K562 (cell line): ENCODE measurements at regions of chr15 and their contacts with region 1.

Region 1: DNA sequence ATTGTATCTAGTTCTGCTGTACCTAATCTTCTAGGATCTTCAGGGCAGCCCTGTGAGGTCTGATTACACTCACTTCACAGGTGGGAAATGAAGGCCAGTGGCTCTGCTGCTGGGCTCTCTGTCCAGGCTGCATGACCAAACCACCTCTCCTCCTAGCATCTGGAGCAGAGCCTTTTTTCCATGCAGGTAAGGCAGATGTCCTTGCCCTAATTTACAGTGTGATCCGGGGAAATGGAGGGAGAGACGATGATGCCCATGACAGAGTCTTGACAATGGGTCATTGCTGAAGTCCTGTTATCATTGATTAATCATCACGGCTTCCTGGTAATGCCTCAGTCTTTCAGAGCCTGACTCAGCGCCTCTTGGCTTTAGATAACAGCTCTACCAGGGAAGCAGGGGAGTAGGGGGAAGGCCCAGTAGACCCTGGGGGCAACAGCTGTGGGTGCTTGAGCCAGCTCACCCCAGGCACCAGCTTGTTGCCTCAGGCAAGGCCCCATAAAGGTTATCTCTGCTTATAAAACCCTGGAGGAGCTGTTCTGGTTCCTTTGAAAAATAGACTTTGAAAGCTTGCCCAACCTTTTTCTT is 153.4 kb downstream of the GABRG3 start:
- DNase-seq: peak; percentile 49 to 85 (median 63)
- ATAC-seq: peak; percentile 66
- H3K4me3 ChIP-seq: no peak overlapping the region
- H3K27ac ChIP-seq: peak overlapping the region; percentile 86
- H3K4me1 ChIP-seq: peaks cover 26 to 71% of the 10 kb centered on the region in 2 experiments; a peak in 4 of 5 replicates
- H3K27me3 ChIP-seq: no peaks in the 10 kb centered on the region
- CTCF ChIP-seq: no peak
- EP300 ChIP-seq: peak; percentile 75; the same call in 1 of the 2 replicates
- POLR2A ChIP-seq: no peak
- RAD21 ChIP-seq: no peak

Region 2: DNA sequence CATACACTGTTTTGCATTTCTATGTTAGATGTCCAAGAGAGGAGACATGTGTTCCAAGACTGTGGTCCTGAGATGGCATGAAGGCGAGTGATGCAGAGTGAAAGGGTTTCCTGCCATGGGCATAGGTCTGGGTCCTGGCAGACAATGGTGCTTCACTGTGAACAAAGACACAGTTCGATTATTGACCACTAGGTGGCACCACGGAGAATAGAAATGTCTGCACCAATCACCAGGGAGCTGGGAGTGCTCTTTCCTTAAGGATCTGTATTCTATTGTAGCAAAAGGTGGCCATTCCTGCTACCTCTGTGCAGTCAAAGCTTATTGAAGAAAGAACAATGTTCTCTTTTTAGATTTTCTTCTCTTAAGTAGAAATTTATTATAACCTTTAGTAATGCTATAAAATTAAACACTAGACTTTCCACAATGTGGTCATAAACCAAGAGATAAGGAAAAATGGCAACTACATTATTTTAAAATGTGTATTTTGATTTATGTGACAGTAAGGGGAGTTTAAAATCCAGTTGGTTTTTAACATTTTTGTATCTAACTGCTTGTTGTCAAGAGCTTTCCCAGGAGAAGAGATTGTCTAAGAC is 64.7 kb before region 1 on chr15:
- CTCF ChIA-PET with region 1: no interaction called
- POLR2A ChIA-PET with region 1: interaction called, 3 read pairs
- in situ Hi-C with region 1: no loop called
- intact Hi-C with region 1: loop called (anchors 10 kb)
- DNase-seq: peak; percentile 80 to 90 (median 85)
- ATAC-seq: peak; percentile 91
- H3K4me3 ChIP-seq: no peak overlapping the region
- H3K27ac ChIP-seq: no peak overlapping the region
- H3K4me1 ChIP-seq: no peaks in the 10 kb centered on the region
- H3K27me3 ChIP-seq: peaks cover 8 to 44% of the 10 kb centered on the region in 2 experiments
- CTCF ChIP-seq: peak; percentile 64 to 75 (median 71)
- EP300 ChIP-seq: no peak
- POLR2A ChIP-seq: no peak
- RAD21 ChIP-seq: peak in 1 of 2 experiments; percentile 73; a peak in 2 of 4 replicates

Region 3: GRCh38 chr15:27087651-27088583 is 36.5 kb before region 1 on chr15:
- CTCF ChIA-PET with region 1: no interaction called
- POLR2A ChIA-PET with region 1: no interaction called
- in situ Hi-C with region 1: no loop called
- intact Hi-C with region 1: loop called (anchors 2 kb)
- DNase-seq: peak; percentile 69 to 79 (median 76)
- ATAC-seq: peak; percentile 75
- H3K4me3 ChIP-seq: peak overlapping the region; percentile 55
- H3K27ac ChIP-seq: peak overlapping the region; percentile 91
- H3K4me1 ChIP-seq: peaks cover 35 to 38% of the 10 kb centered on the region in 2 experiments
- H3K27me3 ChIP-seq: no peaks in the 10 kb centered on the region
- CTCF ChIP-seq: no peak
- EP300 ChIP-seq: no peak
- POLR2A ChIP-seq: peak; percentile 68
- RAD21 ChIP-seq: no peak

Region 4: DNA sequence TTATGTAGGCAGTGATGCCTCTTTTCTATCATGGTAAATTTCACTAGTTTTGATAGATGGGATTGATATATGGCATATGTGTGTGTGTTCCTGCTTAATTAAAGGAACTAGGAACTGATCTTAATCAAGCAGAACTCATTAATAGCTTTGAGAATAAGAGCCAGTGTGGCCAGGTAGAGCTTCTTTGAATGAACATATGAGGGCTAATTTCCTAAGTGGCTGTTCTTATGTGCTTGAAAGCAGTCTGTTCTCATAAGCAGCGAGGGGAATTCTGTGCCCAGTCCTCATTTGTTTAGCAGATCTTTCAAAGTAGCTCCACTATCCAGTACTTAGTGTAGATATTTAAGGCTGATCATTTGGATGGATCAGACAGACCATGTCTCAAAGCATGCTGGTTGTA is 10.8 kb after region 1 on chr15:
- CTCF ChIA-PET with region 1: no interaction called
- POLR2A ChIA-PET with region 1: interaction called, 11 read pairs
- in situ Hi-C with region 1: no loop called
- intact Hi-C with region 1: no loop called
- DNase-seq: no peak
- ATAC-seq: peak; percentile 15
- H3K4me3 ChIP-seq: no peak overlapping the region
- H3K27ac ChIP-seq: peak overlapping the region; percentile 31; the same call in 2 of the 3 replicates
- H3K4me1 ChIP-seq: peaks cover 0 to 32% of the 10 kb centered on the region in 2 experiments; a peak in 3 of 5 replicates
- H3K27me3 ChIP-seq: no peaks in the 10 kb centered on the region
- CTCF ChIP-seq: no peak
- EP300 ChIP-seq: no peak
- POLR2A ChIP-seq: no peak
- RAD21 ChIP-seq: no peak

Region 5: GRCh38 chr15:27165583-27165982 is 41.2 kb after region 1 on chr15:
- CTCF ChIA-PET with region 1: no interaction called
- POLR2A ChIA-PET with region 1: no interaction called
- in situ Hi-C with region 1: no loop called
- intact Hi-C with region 1: no loop called
- DNase-seq: no peak
- ATAC-seq: no peak
- H3K4me3 ChIP-seq: no peak overlapping the region
- H3K27ac ChIP-seq: no peak overlapping the region
- H3K4me1 ChIP-seq: 0 out of 5 replicates have a peak, but pooled peaks cover 0 to 3% of the 10 kb centered on the region in 2 experiments
- H3K27me3 ChIP-seq: no peaks in the 10 kb centered on the region
- CTCF ChIP-seq: no peak
- EP300 ChIP-seq: no peak
- POLR2A ChIP-seq: no peak
- RAD21 ChIP-seq: no peak